ENCODE measurements at regions of chr12 and their contacts with region 1.

Region 1: DNA sequence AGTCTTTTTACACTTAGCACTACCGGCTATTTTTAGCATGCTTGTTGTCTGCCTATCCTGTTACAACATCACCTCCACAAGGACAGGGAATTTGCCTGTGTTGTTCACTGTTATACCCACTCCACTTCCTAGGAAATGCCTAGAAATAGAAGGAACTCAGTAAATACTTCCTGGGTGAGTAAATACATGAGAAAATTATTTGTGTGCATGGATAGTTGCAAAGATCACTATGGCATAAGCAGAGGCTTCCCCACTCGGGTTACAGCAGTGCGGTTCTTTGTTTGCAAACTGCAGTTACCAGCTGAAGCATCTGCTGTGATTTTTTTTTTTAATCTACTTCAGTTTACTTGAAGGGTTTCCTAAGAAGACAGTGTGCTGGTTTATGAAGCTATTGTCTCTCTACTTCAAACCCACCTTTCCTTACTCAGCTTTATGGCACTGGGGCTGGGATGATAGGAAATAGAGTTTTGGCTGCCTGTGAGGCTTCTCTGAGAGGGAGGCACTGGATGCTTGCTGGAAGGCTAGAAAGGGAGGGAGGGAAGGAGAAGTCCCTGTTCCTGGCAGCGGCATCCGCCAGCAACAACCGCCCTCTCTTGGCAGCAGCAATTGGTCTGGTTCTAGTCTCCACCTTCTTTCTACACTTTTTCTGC is 29.0 kb downstream of the PDE6H start:
- ATAC-seq: peak; percentile 29 to 98 (median 66)
- H3K4me3 ChIP-seq: no peak overlapping the region
- H3K27ac ChIP-seq: no peak overlapping the region
- H3K4me1 ChIP-seq: peaks cover 4 to 7% of the 10 kb centered on the region in 2 donors

Region 2: GRCh38 chr12:14928969-14929368 is 72.9 kb before region 1 on chr12:
- in situ Hi-C with region 1: no loop called
- ATAC-seq: peak in 2 of 8 experiments; percentile 47 to 57
- H3K4me3 ChIP-seq: no peak overlapping the region
- H3K27ac ChIP-seq: no peak overlapping the region
- H3K4me1 ChIP-seq: no peaks in the 10 kb centered on the region

Region 3: DNA sequence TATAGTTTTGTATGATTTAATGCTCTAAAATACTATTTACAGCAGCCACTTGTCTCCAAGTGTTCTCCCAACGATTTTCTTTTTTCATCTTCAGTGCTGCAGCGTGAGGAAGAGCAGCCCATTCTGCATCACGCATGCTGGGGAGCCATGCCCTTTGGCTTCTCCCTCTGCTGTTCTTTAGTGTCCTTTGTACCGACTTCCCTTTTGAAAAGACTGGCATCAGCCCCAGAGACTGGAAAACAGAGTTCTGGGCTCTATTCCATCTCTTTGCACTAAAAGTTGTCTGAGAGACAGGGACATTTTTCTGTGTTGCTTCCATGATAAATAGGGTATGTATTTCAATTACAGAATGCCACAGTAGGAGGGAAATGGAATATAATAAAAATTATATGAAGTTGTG is 114.2 kb after region 1 on chr12:
- in situ Hi-C with region 1: loop called in 1 of 9 experiments (anchors 25 kb)
- ATAC-seq: peak in 2 of 8 experiments; percentile 37 to 88
- H3K4me3 ChIP-seq: no peak overlapping the region
- H3K27ac ChIP-seq: no peak overlapping the region
- H3K4me1 ChIP-seq: peaks cover 0 to 10% of the 10 kb centered on the region in 2 donors

Region 4: GRCh38 chr12:15220994-15221885 is 219.4 kb after region 1 on chr12 and contains the start of gene RERG:
- in situ Hi-C with region 1: loop called in 2 of 9 experiments (anchors 25 kb)
- ATAC-seq: peak; percentile 97 to 100 (median 99)
- H3K4me3 ChIP-seq: peak within 1 kb of the TSS; percentile 26 to 51 (median 34)
- H3K27ac ChIP-seq: no peak within 1 kb of the TSS
- H3K4me1 ChIP-seq: peaks cover 8 to 10% of the 10 kb centered on the region in 2 donors
- total RNA-seq, gene RERG: 0.18 to 23.5 (median 1.7) TPM

Region 5: DNA sequence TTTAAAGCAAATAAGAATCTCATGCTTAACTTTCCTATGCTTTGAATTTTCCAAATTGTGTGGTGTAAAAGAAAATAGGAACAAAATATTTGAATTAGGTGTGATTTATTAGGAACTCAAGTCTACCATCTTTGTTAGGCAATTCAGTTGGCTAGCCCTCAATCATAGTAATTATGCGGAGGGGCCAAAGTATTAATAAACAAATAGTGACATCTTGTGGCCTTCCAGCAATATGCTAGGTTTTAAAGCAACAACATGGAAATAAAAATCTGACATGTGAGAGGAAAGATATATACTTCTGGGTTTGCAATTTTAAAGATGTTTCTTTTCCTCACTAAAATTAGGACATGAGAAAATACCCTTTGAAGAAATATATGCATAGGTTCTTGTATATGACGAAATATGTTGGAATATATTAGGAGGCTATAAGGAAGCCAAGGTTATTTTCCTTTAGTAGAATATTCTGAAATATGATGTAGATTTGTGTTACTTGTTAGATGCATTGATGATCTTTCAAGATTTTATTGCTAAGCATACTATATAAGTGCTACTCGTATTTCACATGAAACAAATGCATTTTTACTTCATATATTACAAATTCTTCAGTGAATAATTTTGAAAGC is 520.8 kb after region 1 on chr12:
- in situ Hi-C with region 1: loop called in 1 of 9 experiments (anchors 25 kb)
- ATAC-seq: peak in 6 of 8 experiments; percentile 45 to 64 (median 56)
- H3K4me3 ChIP-seq: no peak overlapping the region
- H3K27ac ChIP-seq: no peak overlapping the region
- H3K4me1 ChIP-seq: peaks cover 0 to 7% of the 10 kb centered on the region in 2 donors

Measured in motor neuron (in vitro differentiated cells).